GM18951 (cell line): ENCODE measurements at regions of chr3 and their contacts with region 1.

Region 1: DNA sequence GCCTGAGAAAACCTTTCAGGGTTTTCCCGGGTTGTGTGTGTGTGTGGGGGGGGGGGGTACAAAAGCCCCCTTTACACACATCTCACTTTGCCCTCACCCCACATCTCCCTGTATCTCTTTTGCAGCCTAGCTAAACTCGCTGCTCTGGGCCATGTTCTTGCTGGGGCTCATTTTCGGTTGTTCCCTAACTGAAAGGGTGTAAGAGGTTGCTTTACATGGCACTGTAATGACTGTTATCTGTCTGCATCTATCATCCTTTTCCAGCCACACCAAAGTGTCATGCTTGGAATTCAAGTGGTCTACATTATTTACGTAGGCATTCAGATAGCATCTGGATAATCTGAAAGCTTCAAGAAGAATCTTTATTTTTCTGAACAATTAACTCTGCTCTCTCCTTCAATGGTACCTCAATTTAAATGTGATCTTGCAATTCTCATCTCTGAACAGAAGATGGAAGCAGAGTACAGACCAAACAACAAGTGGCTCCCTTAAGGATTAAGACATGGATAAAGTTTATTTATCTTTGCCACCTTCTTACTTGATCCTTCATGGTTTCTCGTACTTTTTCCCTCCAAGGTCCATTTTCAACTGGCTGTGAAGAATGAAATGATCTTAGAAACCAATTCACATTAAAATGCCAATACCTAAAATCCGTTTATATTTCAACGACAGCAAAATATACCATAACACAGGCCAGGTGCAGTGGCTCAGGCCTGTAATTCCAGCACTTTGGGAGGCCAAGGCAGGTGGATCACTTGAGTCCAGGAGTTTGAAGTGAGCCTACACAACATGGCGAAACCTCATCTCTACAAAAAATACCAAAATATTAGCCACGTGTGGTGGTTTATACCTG is 34.9 kb downstream of the DCLK3 start:
- POLR2A ChIP-seq: no peak

Region 2: GRCh38 chr3:36937492-36937891 is 208.1 kb after region 1 on chr3:
- in situ Hi-C with region 1: loop called (anchors 10 kb)
- POLR2A ChIP-seq: no peak

Region 3: DNA sequence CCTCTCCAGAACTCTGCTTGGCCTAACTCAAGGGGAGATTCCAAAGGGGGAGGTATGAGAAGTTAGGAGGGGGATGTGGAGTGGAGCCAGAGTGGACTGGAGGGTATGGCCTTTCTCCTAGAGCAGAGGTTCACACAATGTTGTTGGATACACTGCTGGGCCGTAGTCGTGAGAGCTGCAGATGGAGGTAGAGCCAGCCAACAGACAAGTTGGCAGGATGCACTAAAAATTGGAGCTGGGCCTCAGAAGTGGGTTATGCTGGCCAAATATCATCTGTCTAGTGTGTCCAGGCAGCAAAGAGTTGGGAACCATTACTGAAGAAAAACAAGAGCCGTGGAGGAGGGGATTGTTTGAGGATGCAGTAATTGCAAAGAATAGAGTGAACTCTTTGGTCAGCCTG is 472.6 kb after region 1 on chr3:
- in situ Hi-C with region 1: loop called (anchors 10 kb)
- POLR2A ChIP-seq: no peak